Activated CD8-positive, alpha-beta T cell treated with anti-CD3 and anti-CD28 coated beads, Interleukin-2, amount 10 ng/mL, durations not matched to agents 7 days and 5 days (primary cell): ENCODE measurements at regions of chr6 and their contacts with region 1.

Region 1: GRCh38 chr6:20401205-20402091 is at the start of gene E2F3:
- DNase-seq: peak; percentile 100
- ATAC-seq: peak; percentile 86
- H3K4me3 Mint-ChIP-seq: peak within 1 kb of the TSS; percentile 86
- H3K27ac Mint-ChIP-seq: peak within 1 kb of the TSS; percentile 98
- H3K4me1 Mint-ChIP-seq: peaks cover 35% of the 10 kb centered on the region
- H3K27me3 Mint-ChIP-seq: no peaks in the 10 kb centered on the region
- total RNA-seq, gene E2F3: 26.7 to 27.4 TPM

Region 2: DNA sequence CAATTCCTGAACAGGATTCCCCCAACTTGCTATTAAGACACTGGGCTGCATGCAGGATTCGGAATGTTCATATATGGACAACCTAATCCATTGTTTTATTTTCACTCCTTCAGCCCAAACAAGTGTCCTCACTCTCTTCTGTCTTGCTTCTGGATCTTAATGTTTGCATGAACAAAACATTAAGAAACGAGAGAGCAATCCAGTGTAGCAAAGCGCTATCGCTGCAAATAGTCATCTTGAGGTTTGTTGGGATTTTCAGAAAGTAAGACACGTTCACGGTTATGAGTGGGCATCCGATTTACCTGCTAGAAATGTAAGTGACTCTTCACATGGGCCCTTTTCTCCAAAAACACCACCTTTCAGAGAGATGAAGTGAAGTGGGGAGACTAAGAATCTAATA is 345.5 kb before region 1 on chr6:
- CTCF ChIA-PET with region 1: no interaction called
- POLR2A ChIA-PET with region 1: no interaction called
- DNase-seq: no peak
- ATAC-seq: no peak
- H3K4me3 Mint-ChIP-seq: no peak overlapping the region
- H3K27ac Mint-ChIP-seq: no peak overlapping the region
- H3K4me1 Mint-ChIP-seq: peaks cover 4% of the 10 kb centered on the region
- H3K27me3 Mint-ChIP-seq: no peaks in the 10 kb centered on the region

Region 3: GRCh38 chr6:20291764-20292580 is 109.5 kb before region 1 on chr6:
- CTCF ChIA-PET with region 1: interaction called, 14 read pairs
- POLR2A ChIA-PET with region 1: interaction called, 3 read pairs
- DNase-seq: peak; percentile 86
- ATAC-seq: peak; percentile 91
- H3K4me3 Mint-ChIP-seq: no peak overlapping the region
- H3K27ac Mint-ChIP-seq: peak overlapping the region; percentile 44
- H3K4me1 Mint-ChIP-seq: peaks cover 29% of the 10 kb centered on the region
- H3K27me3 Mint-ChIP-seq: no peaks in the 10 kb centered on the region

Region 4: GRCh38 chr6:20366091-20366832 is 35.2 kb before region 1 on chr6:
- CTCF ChIA-PET with region 1: interaction called, 22 read pairs
- POLR2A ChIA-PET with region 1: interaction called, 40 read pairs
- DNase-seq: peak; percentile 64
- ATAC-seq: peak; percentile 75
- H3K4me3 Mint-ChIP-seq: peak overlapping the region; percentile 61
- H3K27ac Mint-ChIP-seq: peak overlapping the region; percentile 95
- H3K4me1 Mint-ChIP-seq: peaks cover 63% of the 10 kb centered on the region
- H3K27me3 Mint-ChIP-seq: no peaks in the 10 kb centered on the region

Region 5: DNA sequence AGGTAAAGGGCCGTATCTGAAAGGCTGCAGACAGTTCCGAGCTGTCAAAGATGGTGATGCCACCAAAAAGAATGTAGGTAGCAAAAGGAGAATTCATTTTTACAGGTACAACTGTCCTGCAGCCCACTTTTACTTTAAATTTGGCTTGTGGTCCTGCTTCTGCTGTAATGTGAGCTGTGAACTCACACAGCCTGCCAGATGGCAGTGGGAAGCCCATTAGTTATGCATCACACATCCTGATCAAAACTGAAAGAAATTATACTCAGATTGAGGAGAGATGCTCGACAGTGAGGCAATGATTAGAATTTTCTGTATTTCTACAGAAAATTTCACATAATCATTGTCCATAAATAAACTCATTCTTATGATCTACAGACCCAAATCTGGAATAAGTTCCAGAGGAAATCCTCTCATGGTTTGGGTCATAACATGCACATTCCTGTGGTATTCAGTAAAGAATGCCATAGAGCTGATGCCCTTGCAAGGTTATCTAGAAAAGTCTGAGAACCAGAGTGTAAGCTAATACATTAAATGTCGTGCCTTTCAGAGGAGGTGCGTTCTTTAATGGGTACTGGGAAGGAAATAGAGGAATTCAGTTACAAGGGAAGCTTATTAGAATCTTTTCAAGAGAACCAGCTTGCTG is 23.7 kb before region 1 on chr6:
- CTCF ChIA-PET with region 1: interaction called, 10 read pairs
- POLR2A ChIA-PET with region 1: interaction called, 7 read pairs
- DNase-seq: no peak
- ATAC-seq: no peak
- H3K4me3 Mint-ChIP-seq: no peak overlapping the region
- H3K27ac Mint-ChIP-seq: no peak overlapping the region
- H3K4me1 Mint-ChIP-seq: peaks cover 22% of the 10 kb centered on the region
- H3K27me3 Mint-ChIP-seq: no peaks in the 10 kb centered on the region

Region 6: GRCh38 chr6:20417819-20418218 is 16.4 kb after region 1 on chr6:
- CTCF ChIA-PET with region 1: interaction called, 22 read pairs
- POLR2A ChIA-PET with region 1: interaction called, 10 read pairs
- DNase-seq: no peak
- ATAC-seq: peak; percentile 44
- H3K4me3 Mint-ChIP-seq: no peak overlapping the region
- H3K27ac Mint-ChIP-seq: peak overlapping the region; percentile 53
- H3K4me1 Mint-ChIP-seq: peaks cover 54% of the 10 kb centered on the region
- H3K27me3 Mint-ChIP-seq: no peaks in the 10 kb centered on the region

Region 7: DNA sequence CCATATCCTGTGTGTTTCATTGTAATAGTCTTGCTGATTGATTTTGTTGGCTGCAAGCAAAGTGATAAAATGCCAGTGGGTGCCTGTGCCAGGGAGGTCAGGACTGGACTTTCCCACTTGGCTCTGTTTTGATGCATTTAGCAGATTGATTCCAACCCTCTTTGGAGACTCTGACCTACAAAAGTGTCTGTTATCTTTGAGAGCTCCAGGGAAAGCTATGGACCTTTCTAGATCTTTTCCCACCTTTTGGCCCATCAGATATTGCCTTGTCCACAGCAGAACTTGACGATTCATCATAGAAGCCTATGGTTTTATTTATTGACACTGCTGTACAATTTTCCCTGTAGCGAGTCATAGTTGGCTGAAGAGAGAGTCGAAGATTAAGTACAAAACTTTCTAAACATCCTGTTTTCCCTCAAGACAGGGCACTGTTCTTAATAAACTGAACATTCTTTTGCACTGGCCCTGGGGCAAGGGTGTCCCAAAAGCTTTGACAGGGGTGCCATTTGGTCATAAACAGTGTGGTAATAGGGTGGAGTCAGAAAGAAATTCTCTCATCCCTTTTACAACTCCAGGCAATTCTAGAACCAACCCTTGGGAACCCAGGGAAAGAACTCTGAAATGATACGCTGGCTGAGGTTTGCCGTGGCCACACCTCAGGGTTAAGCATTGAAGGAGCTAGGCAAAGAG is 53.9 kb after region 1 on chr6:
- CTCF ChIA-PET with region 1: interaction called, 14 read pairs
- POLR2A ChIA-PET with region 1: interaction called, 4 read pairs
- DNase-seq: no peak
- ATAC-seq: no peak
- H3K4me3 Mint-ChIP-seq: no peak overlapping the region
- H3K27ac Mint-ChIP-seq: no peak overlapping the region
- H3K4me1 Mint-ChIP-seq: peaks cover 13% of the 10 kb centered on the region
- H3K27me3 Mint-ChIP-seq: no peaks in the 10 kb centered on the region

Region 8: DNA sequence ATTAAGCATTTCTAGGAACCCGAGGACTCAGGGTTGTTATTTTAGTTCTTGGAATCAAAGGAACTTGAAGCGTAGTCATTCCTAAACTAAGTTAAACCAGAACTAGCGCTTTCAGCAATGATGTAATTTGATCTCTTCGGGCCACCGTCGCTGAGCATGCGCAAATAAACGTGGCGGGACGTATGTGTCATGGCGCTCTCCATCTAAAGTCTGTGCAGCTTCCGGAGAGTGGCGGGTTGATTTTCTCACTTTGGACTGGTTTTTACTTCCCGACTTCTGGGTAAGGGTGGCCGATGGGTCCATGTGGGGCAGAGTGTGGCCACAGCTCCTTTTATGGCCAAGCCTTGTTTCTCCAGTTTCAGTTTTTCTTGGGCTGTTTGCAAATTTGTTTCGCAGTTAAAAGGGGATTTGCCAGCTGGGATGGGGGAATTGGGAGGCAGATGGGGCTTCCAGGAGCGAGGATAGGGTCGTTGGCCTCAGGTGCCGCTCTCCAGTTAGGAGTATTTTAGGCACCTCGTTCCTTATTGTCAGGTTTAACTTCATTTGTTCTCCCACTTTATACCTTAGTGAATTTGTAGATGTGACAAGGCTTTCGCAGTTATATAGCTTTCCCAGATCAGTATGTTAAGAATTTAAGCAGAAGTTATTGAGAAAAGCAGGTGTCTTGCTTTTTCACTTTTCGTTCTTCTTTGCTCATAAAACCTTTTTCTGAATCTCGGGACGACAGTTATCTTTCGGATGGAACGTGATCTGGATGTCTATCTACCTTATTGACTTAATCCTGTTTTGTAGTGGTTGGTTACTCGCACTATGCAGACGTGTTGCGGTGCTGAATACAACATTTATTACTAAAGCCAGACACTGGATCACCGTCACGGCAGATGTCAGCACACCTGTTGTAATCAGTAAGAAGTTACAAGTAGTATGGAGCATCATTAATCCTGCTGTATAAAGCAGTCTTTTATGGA is 133.1 kb after region 1 on chr6 and contains the start of gene CDKAL1:
- CTCF ChIA-PET with region 1: interaction called, 29 read pairs
- POLR2A ChIA-PET with region 1: interaction called, 22 read pairs
- DNase-seq: peak; percentile 95
- ATAC-seq: peak; percentile 92
- H3K4me3 Mint-ChIP-seq: peak within 1 kb of the TSS; percentile 98
- H3K27ac Mint-ChIP-seq: peak within 1 kb of the TSS; percentile 97
- H3K4me1 Mint-ChIP-seq: peaks cover 43% of the 10 kb centered on the region
- H3K27me3 Mint-ChIP-seq: no peaks in the 10 kb centered on the region
- total RNA-seq, gene CDKAL1: 24.3 to 25.2 TPM